Stomach (tissue), 19 donors: ENCODE measurements at regions of chr6 and their contacts with region 1.

Region 1: GRCh38 chr6:13624871-13625288 is 9.7 kb downstream of the NOL7 start:
- DNase-seq: peak in 1 of 2 donors; percentile 56
- H3K4me3 ChIP-seq: no peak overlapping the region
- H3K27ac ChIP-seq: no peak overlapping the region
- H3K4me1 ChIP-seq: peaks cover 0 to 5% (median 0%) of the 10 kb centered on the region in 4 donors
- H3K27me3 ChIP-seq: no peaks in the 10 kb centered on the region
- CTCF ChIP-seq: peak in 2 of 7 experiments; percentile 25
- EP300 ChIP-seq: no peak
- POLR2A ChIP-seq: no peak

Region 2: DNA sequence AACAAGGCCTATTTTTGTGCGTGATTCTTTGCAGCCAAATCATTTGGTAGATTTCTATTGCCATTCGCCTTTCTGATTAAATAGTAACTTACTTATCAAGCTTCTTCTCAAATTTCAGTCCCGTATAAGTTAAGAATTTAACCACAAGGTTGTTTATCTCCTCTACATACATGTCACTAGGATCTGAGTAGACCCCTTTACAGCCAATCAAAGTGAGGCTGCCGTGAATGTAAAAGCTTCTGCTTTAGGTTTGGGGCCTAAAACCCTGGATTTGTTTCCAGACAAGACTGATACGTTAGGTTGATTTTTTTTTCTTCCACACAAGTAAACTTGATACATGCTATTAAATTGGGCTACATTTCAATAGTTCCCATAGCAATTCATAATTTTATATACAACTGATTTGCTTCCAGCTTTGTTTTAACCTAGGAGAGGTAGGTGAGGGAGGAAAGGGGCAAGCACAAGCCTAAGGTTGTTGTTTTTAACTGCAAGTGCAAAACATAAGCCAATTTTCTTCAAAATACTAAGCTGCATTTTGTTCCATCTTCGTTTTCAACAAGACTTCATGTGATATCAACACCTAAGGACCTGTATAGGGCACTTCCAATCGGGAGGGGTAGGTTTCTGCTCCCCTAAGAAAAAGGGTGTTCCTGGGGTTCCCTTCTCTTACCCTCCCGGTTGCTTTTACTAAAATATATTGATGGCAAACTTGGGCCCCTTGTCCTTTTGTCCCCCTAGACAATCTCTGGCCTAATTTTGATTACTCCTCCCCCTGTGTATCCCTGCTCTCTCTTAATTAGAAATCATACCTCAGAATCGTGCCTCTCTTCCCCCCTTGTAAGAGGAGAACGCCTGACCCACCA is 85.0 kb after region 1 on chr6:
- intact Hi-C with region 1: loop called (anchors 10 kb)
- DNase-seq: peak in 1 of 2 donors; percentile 74
- H3K4me3 ChIP-seq: peak overlapping the region; percentile 87 to 93 (median 90)
- H3K27ac ChIP-seq: peak overlapping the region; percentile 93 to 98 (median 97)
- H3K4me1 ChIP-seq: peaks cover 22 to 55% (median 33%) of the 10 kb centered on the region in 4 donors
- H3K27me3 ChIP-seq: no peaks in the 10 kb centered on the region
- CTCF ChIP-seq: no peak
- EP300 ChIP-seq: no peak
- POLR2A ChIP-seq: no peak